Activated naive CD4-positive, alpha-beta T cell treated with anti-CD3 and anti-CD28 coated beads for 36 hours (primary cell): ENCODE measurements at regions of chr11 and their contacts with region 1.

Region 1: DNA sequence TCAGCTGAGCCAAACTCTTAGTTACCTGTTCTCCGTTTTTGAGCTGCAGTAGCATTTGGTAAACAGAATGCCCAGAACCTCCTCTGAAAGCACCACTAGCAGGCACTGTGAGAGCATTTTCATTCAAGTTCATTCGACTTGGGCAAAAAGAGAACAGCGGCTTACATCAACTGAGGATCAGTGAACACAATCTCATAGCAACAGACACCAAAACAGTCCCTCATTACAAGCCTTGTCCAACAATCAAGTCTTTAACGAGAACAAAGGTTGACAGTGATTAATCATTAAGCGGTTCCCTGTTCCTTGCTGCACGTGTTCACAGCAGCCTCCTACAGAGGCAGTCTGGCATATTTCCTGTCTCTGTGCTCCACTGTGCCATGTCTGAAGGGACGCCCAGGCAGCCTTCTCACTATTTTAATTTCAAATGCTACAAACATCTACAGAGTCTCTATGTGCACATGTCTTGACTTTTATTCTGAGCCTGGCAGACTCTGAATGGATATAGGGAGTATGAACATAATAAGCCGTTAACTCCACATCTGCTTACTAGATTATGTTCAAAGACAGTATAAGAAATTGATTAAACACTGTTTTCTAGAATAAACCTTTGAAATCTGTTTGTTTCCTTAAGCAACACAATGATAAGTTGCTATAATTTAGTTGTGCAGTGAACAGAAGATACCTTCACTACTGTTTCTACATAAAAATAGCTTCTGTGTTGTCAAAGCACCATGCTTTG is 88.3 kb upstream of the MTMR2 start:
- DNase-seq: peak; percentile 67
- H3K4me3 Mint-ChIP-seq: peak overlapping the region; percentile 52
- H3K27ac Mint-ChIP-seq: peak overlapping the region; percentile 72
- H3K4me1 Mint-ChIP-seq: peaks cover 69% of the 10 kb centered on the region
- H3K27me3 Mint-ChIP-seq: no peaks in the 10 kb centered on the region

Region 2: GRCh38 chr11:96075532-96075959 is 63.3 kb after region 1 on chr11:
- CTCF ChIA-PET with region 1: interaction called, 4 read pairs
- intact Hi-C with region 1: loop called (anchors 1 kb)
- DNase-seq: peak; percentile 63
- H3K4me3 Mint-ChIP-seq: peak overlapping the region; percentile 2
- H3K27ac Mint-ChIP-seq: peak overlapping the region; percentile 93
- H3K4me1 Mint-ChIP-seq: peaks cover 85% of the 10 kb centered on the region
- H3K27me3 Mint-ChIP-seq: no peaks in the 10 kb centered on the region

Region 3: DNA sequence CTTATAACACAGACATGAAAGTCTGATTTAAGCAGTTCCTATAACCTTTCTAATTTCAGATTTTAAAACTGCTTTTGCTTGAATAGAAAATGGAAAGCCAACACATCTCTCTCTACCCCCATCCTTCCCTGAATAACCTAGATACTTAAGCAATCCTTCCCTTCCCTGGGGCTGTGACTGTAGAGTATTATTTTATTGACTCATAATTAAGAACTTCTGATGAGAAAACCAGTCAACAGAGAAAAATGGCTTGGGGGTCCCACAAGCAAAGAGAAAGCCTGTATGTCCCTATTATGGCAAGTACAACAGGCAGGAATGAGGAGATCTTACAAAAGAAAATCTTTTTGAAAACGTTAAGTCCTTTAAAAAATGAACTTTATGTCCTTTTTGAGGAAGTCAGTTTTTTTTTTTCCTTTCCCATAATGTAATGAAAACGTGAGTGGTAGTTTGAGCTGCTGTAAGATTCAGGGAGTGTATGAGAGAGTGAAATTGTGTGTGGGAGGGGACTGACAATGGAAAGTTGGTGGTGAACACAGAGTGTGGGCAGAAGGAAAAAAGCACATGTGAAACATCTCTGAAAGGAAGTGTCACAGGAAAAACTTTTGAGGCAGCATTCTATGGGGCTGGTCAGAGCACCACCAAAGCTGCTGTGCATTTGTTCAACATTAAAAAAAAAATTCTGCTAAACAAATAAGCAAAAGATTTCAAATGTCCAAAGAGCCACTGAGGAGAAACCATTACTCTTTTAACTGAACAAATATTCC is 176.2 kb after region 1 on chr11:
- CTCF ChIA-PET with region 1: interaction called, 3 read pairs
- intact Hi-C with region 1: loop called (anchors 1 kb)
- DNase-seq: peak; percentile 49
- H3K4me3 Mint-ChIP-seq: peak overlapping the region; percentile 38
- H3K27ac Mint-ChIP-seq: peak overlapping the region; percentile 92
- H3K4me1 Mint-ChIP-seq: peaks cover 90% of the 10 kb centered on the region
- H3K27me3 Mint-ChIP-seq: no peaks in the 10 kb centered on the region

Region 4: DNA sequence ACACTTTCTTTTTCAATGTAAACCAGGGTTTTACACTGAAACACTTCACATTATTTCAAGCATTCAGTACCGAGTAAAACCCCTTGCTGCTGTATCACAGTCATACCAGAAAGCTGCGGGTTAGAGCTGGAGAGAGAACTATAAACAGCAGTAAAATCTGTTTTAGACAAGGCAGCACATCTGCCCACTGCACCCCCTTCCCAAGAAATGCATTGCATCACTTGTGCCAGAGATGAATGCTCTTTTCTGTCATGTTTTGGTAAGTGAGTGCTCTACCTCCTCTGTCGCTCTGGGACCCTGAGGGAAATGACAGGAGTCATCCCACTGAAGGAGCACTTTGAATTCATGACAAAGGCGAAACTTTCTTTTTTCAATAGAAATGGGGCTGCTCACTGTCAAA is 223.5 kb after region 1 on chr11:
- CTCF ChIA-PET with region 1: interaction called, 4 read pairs
- intact Hi-C with region 1: loop called (anchors 1 kb)
- DNase-seq: peak; percentile 89
- H3K4me3 Mint-ChIP-seq: peak overlapping the region; percentile 38
- H3K27ac Mint-ChIP-seq: peak overlapping the region; percentile 90
- H3K4me1 Mint-ChIP-seq: peaks cover 24% of the 10 kb centered on the region
- H3K27me3 Mint-ChIP-seq: no peaks in the 10 kb centered on the region